Endothelial cell of umbilical vein (primary cell): ENCODE measurements at regions of chr22 and their contacts with region 1.

Region 1: DNA sequence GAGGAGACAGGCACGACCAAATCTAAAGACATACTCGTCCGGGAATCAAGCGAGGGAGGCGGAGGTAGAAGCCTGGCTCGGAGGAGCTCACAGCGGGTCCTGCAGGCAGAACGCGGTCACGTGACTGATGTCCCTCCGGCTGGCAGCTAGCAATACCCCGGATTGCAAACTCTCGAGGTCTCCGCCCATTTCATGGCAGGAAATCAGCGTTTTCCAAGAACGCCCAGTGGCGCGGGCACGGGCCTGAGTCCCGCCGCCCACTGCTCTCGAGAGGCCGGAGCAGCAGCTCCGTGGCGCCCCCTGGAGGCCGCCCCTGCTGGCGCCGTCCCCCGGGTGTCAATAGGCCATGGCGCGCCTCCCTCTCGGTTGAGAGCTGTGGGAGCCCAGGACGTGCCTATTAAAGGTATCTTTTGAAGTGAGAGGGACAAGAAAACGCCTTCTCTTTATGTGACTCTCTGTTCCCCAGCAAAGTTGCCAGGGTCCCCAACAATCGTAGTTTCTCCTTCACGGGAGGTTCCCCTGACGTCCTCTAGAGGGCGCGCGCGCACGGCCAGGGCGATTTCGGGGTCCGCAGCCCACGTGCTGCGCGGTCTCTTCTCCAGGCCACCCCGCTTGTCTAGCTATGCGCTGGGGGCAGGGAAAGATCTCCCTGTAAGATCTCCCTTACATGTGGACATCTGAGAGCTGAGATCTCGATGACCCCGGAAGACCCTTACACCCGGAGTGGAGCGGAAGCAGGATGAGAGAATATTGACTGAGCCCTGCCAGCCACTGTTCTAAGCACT is 37.3 kb upstream of the RBFOX2 start:
- DNase-seq: peak; percentile 95
- H3K4me3 ChIP-seq: peak overlapping the region; percentile 22 to 69 (median 37)
- H3K27ac ChIP-seq: peak overlapping the region; percentile 54
- H3K4me1 ChIP-seq: peaks cover 9% of the 10 kb centered on the region
- H3K27me3 ChIP-seq: no peaks in the 10 kb centered on the region
- CTCF ChIP-seq: peak; percentile 94 to 100
- POLR2A ChIP-seq: peak; percentile 91

Region 2: GRCh38 chr22:35684270-35684700 is 381.7 kb before region 1 on chr22:
- CTCF ChIA-PET with region 1: interaction called, 20 read pairs
- POLR2A ChIA-PET with region 1: no interaction called
- dilution Hi-C with region 1: no loop called
- intact Hi-C with region 1: no loop called
- DNase-seq: peak; percentile 34
- H3K4me3 ChIP-seq: no peak overlapping the region
- H3K27ac ChIP-seq: no peak overlapping the region
- H3K4me1 ChIP-seq: no peaks in the 10 kb centered on the region
- H3K27me3 ChIP-seq: peaks cover 2 to 7% of the 10 kb centered on the region in 2 experiments
- CTCF ChIP-seq: peak; percentile 14 to 32
- POLR2A ChIP-seq: no peak

Region 3: DNA sequence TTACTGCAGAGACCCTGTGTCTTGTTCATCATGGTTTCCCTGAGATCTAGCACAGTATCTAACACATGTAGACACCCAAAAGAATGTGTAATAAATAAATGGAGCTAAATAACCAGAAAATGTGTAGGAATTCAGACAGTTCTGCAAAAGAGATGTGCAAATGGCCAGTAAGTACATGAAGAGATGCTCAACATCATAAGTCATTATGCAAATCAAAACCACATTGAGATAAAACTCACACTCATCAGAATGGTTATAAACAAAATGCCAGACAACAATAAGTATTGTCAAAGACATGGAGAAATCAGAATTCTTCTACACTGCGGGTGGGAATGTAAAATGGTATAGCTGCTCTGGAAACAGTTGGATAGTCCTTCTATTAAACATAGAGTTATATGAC is 125.8 kb before region 1 on chr22:
- CTCF ChIA-PET with region 1: interaction called, 20 read pairs
- POLR2A ChIA-PET with region 1: no interaction called
- dilution Hi-C with region 1: no loop called
- intact Hi-C with region 1: no loop called
- DNase-seq: no peak
- H3K4me3 ChIP-seq: no peak overlapping the region
- H3K27ac ChIP-seq: no peak overlapping the region
- H3K4me1 ChIP-seq: no peaks in the 10 kb centered on the region
- H3K27me3 ChIP-seq: no peaks in the 10 kb centered on the region
- CTCF ChIP-seq: no peak
- POLR2A ChIP-seq: no peak

Region 4: GRCh38 chr22:35987487-35987886 is 78.5 kb before region 1 on chr22:
- CTCF ChIA-PET with region 1: interaction called, 13 read pairs
- POLR2A ChIA-PET with region 1: no interaction called
- dilution Hi-C with region 1: no loop called
- intact Hi-C with region 1: no loop called
- DNase-seq: no peak
- H3K4me3 ChIP-seq: no peak overlapping the region
- H3K27ac ChIP-seq: no peak overlapping the region
- H3K4me1 ChIP-seq: peaks cover 15% of the 10 kb centered on the region
- H3K27me3 ChIP-seq: no peaks in the 10 kb centered on the region
- CTCF ChIP-seq: no peak
- POLR2A ChIP-seq: no peak

Region 5: GRCh38 chr22:36028646-36029405 is 37.1 kb before region 1 on chr22 and contains the start of gene RBFOX2:
- CTCF ChIA-PET with region 1: interaction called, 65 read pairs
- POLR2A ChIA-PET with region 1: interaction called, 5 read pairs
- dilution Hi-C with region 1: no loop called
- intact Hi-C with region 1: loop called (anchors 1 kb)
- DNase-seq: peak; percentile 97
- H3K4me3 ChIP-seq: peak within 1 kb of the TSS; percentile 60 to 80 (median 74)
- H3K27ac ChIP-seq: peak within 1 kb of the TSS; percentile 53
- H3K4me1 ChIP-seq: peaks cover 21% of the 10 kb centered on the region
- H3K27me3 ChIP-seq: no peaks in the 10 kb centered on the region
- CTCF ChIP-seq: no peak
- POLR2A ChIP-seq: peak; percentile 11
- total RNA-seq, gene RBFOX2: 125 and 129 TPM in 2 replicates

Region 6: DNA sequence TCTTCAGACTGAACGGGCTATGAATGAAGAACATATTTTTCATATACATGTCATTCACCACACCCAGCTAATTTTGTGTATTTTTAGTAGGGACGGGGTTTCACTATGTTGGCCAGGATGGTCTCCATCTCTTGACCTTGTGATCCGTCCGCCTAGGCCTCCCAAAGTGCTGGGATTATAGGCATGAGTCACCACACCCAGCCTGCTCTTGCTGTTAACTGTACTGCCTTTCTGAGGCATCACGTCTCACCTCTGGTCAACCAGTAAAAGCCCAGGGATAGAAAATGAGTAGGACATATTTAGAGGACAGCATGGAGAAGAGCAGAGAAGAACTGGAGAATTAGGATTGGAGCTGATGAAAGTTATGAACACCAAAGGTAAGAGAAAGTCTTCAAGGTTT is 39.0 kb after region 1 on chr22:
- CTCF ChIA-PET with region 1: interaction called, 10 read pairs
- POLR2A ChIA-PET with region 1: no interaction called
- dilution Hi-C with region 1: no loop called
- intact Hi-C with region 1: no loop called
- DNase-seq: no peak
- H3K4me3 ChIP-seq: no peak overlapping the region
- H3K27ac ChIP-seq: no peak overlapping the region
- H3K4me1 ChIP-seq: no peaks in the 10 kb centered on the region
- H3K27me3 ChIP-seq: peaks cover 6 to 15% of the 10 kb centered on the region in 2 experiments
- CTCF ChIP-seq: no peak
- POLR2A ChIP-seq: no peak

Region 7: DNA sequence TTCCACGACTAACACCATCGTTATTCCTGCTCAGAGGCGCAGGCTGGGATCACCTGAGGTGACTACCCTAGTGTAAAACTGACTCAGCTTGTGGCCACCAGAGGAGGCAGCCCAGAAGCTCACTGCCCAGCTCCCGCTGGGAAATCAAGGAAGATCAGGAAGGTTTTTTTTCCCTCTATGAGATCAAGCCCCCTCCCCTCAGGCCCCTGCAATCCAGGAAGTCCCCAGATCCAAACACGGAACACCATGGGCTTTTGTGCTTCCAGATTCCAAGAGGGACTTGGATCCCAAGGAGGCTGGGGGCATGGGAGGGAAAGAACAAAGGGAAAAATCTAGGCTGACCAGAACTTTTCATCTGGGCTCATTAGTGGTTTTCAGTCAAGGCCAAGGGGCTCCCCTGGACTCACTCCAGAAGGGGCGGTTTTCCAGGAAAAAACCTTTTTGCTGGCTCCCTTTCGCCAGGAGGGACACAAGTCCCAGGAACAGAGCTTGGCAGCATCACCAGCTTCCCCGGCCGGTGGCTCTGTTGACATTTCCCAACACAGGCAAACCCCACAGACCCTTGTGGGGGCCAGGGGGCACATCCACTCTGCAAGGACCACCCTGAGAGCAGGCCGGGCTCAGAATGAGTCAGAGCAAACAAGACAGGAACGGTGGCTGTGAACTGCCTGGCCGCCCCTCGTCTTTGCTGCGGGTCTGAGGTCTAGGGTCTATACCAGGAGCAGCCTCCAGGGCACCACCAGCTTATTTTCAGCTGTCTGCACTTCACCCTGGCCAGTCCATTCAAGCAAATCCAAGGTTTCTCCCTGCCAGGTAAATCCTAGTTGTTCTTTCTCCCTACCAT is 285.0 kb after region 1 on chr22:
- CTCF ChIA-PET with region 1: no interaction called
- POLR2A ChIA-PET with region 1: no interaction called
- dilution Hi-C with region 1: no loop called
- intact Hi-C with region 1: no loop called
- DNase-seq: peak; percentile 56
- H3K4me3 ChIP-seq: no peak overlapping the region
- H3K27ac ChIP-seq: peak overlapping the region; percentile 60
- H3K4me1 ChIP-seq: peaks cover 86% of the 10 kb centered on the region
- H3K27me3 ChIP-seq: no peaks in the 10 kb centered on the region
- CTCF ChIP-seq: no peak
- POLR2A ChIP-seq: no peak